T-cell (primary cell): ENCODE measurements at regions of chr22 and their contacts with region 1.

Region 1: GRCh38 chr22:50525390-50526068 is at the start of gene SCO2:
- DNase-seq: peak; percentile 93 to 99 (median 96)
- ATAC-seq: peak; percentile 70 to 74 (median 74)
- H3K4me3 ChIP-seq: peak within 1 kb of the TSS; percentile 62 to 66
- H3K4me3 Mint-ChIP-seq: peak within 1 kb of the TSS; percentile 83 to 87 (median 84)
- H3K27ac ChIP-seq: peak within 1 kb of the TSS; percentile 93
- H3K27ac Mint-ChIP-seq: peak within 1 kb of the TSS; percentile 78 to 89
- H3K4me1 ChIP-seq: peaks cover 8 to 52% of the 10 kb centered on the region in 2 experiments
- H3K4me1 Mint-ChIP-seq: peaks cover 28 to 33% (median 29%) of the 10 kb centered on the region in 3 donors
- H3K27me3 ChIP-seq: peaks cover 0 to 4% of the 10 kb centered on the region in 2 experiments
- H3K27me3 Mint-ChIP-seq: no peaks in the 10 kb centered on the region
- total RNA-seq, gene SCO2: 3.3 to 5.6 (median 4.0) TPM

Region 2: GRCh38 chr22:50469377-50470305 is 55.9 kb before region 1 on chr22:
- CTCF ChIA-PET with region 1: interaction called in 1 of 2 experiments, 13 read pairs
- POLR2A ChIA-PET with region 1: interaction called in 1 of 2 experiments, 4 read pairs
- DNase-seq: peak; percentile 93 to 99 (median 98)
- ATAC-seq: peak; percentile 83 to 89 (median 86)
- H3K4me3 ChIP-seq: peak overlapping the region; percentile 44 to 69
- H3K4me3 Mint-ChIP-seq: peak overlapping the region; percentile 72 to 91 (median 75)
- H3K27ac ChIP-seq: peak overlapping the region; percentile 82
- H3K27ac Mint-ChIP-seq: peak overlapping the region; percentile 97 to 98
- H3K4me1 ChIP-seq: peaks cover 42 to 85% of the 10 kb centered on the region in 2 experiments
- H3K4me1 Mint-ChIP-seq: peaks cover 64 to 69% (median 67%) of the 10 kb centered on the region in 3 donors
- H3K27me3 ChIP-seq: no peaks in the 10 kb centered on the region
- H3K27me3 Mint-ChIP-seq: no peaks in the 10 kb centered on the region

Region 3: DNA sequence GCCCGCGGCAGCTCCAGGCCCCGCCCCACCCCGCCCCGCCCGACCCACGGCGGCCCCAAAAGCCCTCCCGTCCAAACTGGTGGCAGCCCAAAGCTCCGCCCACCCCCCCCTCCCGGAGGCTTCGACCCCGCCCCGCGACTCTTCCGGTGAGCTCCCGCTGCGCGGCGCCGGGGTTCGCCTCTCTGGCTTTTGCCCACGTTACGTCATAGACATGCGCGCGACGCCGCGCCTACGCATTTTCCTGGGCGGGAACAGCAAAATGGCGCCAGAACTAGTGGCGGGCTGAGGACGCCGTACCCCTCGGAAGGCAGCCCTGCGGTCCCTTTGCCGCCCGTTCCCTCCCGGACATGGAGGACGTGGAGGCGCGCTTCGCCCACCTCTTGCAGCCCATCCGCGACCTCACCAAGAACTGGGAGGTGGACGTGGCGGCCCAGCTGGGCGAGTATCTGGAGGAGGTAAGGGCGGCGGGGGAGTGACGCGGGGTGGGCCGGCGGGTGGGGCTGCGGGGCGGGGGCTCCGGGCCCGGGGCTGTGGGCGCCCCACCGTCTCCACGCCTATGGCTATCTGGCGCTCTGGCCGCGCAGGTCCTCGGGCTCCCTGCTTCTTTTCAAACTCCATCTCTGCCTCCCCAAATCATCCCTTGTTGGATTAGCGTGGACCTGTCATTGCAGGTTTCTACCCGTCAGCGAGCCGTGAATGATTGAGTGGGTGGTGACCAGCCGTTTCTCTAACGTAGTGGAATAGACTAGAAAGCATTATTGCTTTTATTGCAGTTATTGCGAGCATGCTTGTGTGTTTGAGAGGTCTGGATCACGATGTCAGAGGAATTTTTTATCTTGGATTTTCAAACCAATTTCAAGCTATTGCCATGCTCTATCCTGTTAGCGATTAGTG is 17.3 kb before region 1 on chr22 and contains the start of gene NCAPH2:
- CTCF ChIA-PET with region 1: interaction called in 1 of 2 experiments, 62 read pairs
- POLR2A ChIA-PET with region 1: interaction called, 10 to 20 read pairs
- DNase-seq: peak in 30 of 35 experiments; percentile 93 to 98 (median 96)
- ATAC-seq: peak; percentile 75 to 82 (median 79)
- H3K4me3 ChIP-seq: peak within 1 kb of the TSS; percentile 67 to 84
- H3K4me3 Mint-ChIP-seq: peak within 1 kb of the TSS; percentile 93 to 94 (median 93)
- H3K27ac ChIP-seq: peak within 1 kb of the TSS; percentile 84
- H3K27ac Mint-ChIP-seq: peak within 1 kb of the TSS; percentile 95 to 97
- H3K4me1 ChIP-seq: peaks cover 15 to 30% of the 10 kb centered on the region in 2 experiments
- H3K4me1 Mint-ChIP-seq: peaks cover 23 to 28% (median 27%) of the 10 kb centered on the region in 3 donors
- H3K27me3 ChIP-seq: no peaks in the 10 kb centered on the region
- H3K27me3 Mint-ChIP-seq: no peaks in the 10 kb centered on the region
- total RNA-seq, gene NCAPH2: 80.1 to 110 (median 94.6) TPM

Region 4: GRCh38 chr22:50544078-50544745 is 18.7 kb after region 1 on chr22:
- CTCF ChIA-PET with region 1: interaction called, 8 to 70 read pairs
- POLR2A ChIA-PET with region 1: interaction called in 1 of 2 experiments, 21 read pairs
- DNase-seq: peak; percentile 53 to 90 (median 77)
- ATAC-seq: peak; percentile 52 to 60 (median 54)
- H3K4me3 ChIP-seq: peak overlapping the region; percentile 33 to 41
- H3K4me3 Mint-ChIP-seq: peak overlapping the region; percentile 56 to 64 (median 59)
- H3K27ac ChIP-seq: peak overlapping the region; percentile 71
- H3K27ac Mint-ChIP-seq: peak overlapping the region; percentile 70 to 84
- H3K4me1 ChIP-seq: peaks cover 8 to 53% of the 10 kb centered on the region in 2 experiments
- H3K4me1 Mint-ChIP-seq: peaks cover 40 to 60% (median 58%) of the 10 kb centered on the region in 3 donors
- H3K27me3 ChIP-seq: no peaks in the 10 kb centered on the region
- H3K27me3 Mint-ChIP-seq: no peaks in the 10 kb centered on the region

Region 5: GRCh38 chr22:50620593-50621355 is 95.2 kb after region 1 on chr22:
- CTCF ChIA-PET with region 1: interaction called, 3 to 35 read pairs
- POLR2A ChIA-PET with region 1: interaction called in 1 of 2 experiments, 3 read pairs
- DNase-seq: peak; percentile 44 to 97 (median 91)
- ATAC-seq: peak; percentile 67 to 77 (median 73)
- H3K4me3 ChIP-seq: peak overlapping the region; percentile 60 to 77
- H3K4me3 Mint-ChIP-seq: peak overlapping the region; percentile 88 to 90 (median 90)
- H3K27ac ChIP-seq: peak overlapping the region; percentile 96
- H3K27ac Mint-ChIP-seq: peak overlapping the region; percentile 97 to 99
- H3K4me1 ChIP-seq: peaks cover 26 to 40% of the 10 kb centered on the region in 2 experiments
- H3K4me1 Mint-ChIP-seq: peaks cover 36 to 40% (median 39%) of the 10 kb centered on the region in 3 donors
- H3K27me3 ChIP-seq: no peaks in the 10 kb centered on the region
- H3K27me3 Mint-ChIP-seq: no peaks in the 10 kb centered on the region